Activated CD4-positive, alpha-beta T cell treated with anti-CD3 and anti-CD28 coated beads, Interleukin-2, amount 10 ng/mL, durations not matched to agents 24 days and 14 days (primary cell): ENCODE measurements at regions of chrX and their contacts with region 1.

Region 1: DNA sequence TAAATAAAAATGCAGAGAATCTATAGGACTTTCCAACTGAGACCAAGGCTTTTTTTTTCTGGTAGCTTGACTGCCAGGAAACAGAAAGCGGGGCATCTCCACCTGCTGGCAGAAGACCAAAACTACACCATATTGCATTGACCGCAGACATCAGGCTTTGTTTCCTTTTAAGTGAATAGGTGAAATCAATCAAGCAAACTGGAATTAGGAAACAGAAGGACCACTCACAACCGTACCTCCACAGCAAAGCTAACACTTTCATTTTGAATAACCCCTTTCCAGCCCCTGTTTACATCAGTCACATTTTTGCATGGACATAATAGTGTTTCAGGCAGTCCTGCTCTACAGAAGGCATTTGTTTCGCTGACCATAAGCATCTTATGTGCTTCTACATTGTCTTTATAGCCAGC is 218.2 kb downstream of the IDS start:
- DNase-seq: peak; percentile 80
- H3K4me3 Mint-ChIP-seq: no peak overlapping the region
- H3K27ac Mint-ChIP-seq: no peak overlapping the region
- H3K4me1 Mint-ChIP-seq: peaks cover 12% of the 10 kb centered on the region
- H3K27me3 Mint-ChIP-seq: no peaks in the 10 kb centered on the region

Region 2: DNA sequence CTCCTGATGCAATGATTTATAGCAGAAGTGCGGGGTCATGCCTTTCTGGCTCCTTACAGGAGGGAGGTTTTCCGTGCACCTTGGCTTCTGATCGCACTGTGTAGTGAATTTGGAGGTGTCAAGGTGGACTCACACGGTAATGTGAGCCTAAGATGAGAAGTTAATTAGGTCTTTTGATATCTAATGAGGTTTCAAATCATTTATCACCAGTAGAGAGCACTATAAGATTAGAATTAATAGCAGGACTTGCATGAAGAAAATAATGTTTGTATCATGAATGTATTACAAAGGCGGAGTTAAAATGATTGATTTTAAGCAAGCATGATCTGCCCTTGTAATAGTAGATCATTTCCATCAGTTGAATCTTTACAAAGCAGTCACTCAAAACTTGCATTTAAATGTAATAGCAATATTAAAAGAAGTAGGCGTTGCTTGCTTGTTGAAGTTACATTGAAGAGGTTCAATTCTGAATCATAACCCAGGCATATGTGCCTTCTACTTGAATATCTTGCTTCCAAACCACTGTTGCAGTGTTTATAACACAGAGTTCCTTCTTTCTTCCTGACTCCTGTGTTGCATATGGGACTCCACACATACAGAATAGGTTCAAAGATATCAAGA is 1153.7 kb before region 1 on chrX:
- intact Hi-C with region 1: loop called (anchors 5 kb)
- DNase-seq: no peak
- H3K4me3 Mint-ChIP-seq: no peak overlapping the region
- H3K27ac Mint-ChIP-seq: no peak overlapping the region
- H3K4me1 Mint-ChIP-seq: no peaks in the 10 kb centered on the region
- H3K27me3 Mint-ChIP-seq: no peaks in the 10 kb centered on the region

Region 3: DNA sequence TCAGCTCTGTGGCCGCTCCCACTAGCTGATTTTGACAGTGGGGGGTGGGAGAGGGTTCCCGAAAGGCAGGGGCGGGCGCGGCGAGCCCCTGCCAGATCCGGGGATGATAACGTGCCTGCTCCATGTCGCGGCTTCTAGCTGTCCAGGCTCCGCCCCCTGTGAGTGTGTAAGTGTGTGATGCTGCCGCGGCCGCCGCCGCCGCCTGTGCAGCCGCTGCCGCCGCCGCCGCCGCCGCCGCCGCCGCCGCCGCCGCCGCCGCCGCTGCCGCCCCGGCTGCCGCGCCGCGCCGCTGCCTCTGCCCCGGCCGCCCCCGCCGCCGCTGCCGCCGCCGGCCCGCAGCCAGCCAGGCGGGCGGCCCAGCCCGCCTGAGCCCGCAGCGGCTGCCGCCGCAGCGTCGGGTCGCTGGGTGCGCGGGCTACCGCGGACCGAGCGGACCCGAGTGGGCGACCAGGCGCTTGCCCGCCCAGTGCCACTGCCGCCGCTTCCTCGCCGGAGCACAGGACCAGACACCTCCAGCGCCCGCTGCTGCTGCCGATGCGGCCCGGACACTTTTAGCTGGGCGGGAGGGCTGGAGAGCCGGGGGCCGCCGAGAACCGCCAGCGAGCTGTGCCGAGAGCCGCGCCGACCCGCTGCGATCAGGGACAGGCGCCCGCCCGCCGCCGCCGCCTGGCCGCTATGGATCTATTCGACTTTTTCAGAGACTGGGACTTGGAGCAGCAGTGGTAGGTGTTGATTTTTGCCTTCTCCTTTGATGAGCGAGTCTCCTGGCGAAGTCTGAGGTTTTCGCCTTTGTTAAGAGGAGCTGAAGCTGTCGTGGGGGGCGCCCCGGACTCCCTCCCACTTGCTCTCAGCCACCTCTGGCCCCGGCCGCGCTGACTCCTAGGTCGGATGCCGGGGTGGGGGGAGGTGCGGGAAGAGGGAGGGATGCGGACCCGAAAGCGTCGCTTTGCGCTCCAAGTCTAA is 786.2 kb before region 1 on chrX and contains the start of gene AFF2:
- intact Hi-C with region 1: loop called (anchors 10 kb)
- DNase-seq: peak; percentile 72
- H3K4me3 Mint-ChIP-seq: peak within 1 kb of the TSS; percentile 81
- H3K27ac Mint-ChIP-seq: no peak within 1 kb of the TSS
- H3K4me1 Mint-ChIP-seq: peaks cover 8% of the 10 kb centered on the region
- H3K27me3 Mint-ChIP-seq: peaks cover 13% of the 10 kb centered on the region
- total RNA-seq, gene AFF2: 0.70 and 1.1 TPM in 2 replicates

Region 4: DNA sequence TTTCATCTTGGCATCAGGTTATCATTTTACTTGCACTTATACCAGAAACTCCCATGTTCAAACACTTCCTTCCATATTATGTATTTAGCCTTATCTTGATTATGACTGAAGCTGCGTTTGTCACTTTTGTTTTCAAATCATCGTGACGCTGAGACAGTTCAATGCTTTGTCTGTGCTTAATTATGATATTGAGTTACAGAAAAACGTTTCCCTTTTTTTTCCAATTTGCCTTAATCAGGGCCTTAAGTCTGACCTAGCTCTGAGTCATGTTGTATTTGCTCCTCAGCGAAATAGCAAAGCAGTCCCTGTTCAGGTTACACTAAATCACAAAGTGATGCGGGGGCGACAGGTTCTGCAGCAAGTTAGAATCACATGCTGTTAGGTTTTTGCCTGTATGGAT is 531.8 kb before region 1 on chrX:
- intact Hi-C with region 1: no loop called
- DNase-seq: no peak
- H3K4me3 Mint-ChIP-seq: no peak overlapping the region
- H3K27ac Mint-ChIP-seq: no peak overlapping the region
- H3K4me1 Mint-ChIP-seq: no peaks in the 10 kb centered on the region
- H3K27me3 Mint-ChIP-seq: no peaks in the 10 kb centered on the region

Region 5: DNA sequence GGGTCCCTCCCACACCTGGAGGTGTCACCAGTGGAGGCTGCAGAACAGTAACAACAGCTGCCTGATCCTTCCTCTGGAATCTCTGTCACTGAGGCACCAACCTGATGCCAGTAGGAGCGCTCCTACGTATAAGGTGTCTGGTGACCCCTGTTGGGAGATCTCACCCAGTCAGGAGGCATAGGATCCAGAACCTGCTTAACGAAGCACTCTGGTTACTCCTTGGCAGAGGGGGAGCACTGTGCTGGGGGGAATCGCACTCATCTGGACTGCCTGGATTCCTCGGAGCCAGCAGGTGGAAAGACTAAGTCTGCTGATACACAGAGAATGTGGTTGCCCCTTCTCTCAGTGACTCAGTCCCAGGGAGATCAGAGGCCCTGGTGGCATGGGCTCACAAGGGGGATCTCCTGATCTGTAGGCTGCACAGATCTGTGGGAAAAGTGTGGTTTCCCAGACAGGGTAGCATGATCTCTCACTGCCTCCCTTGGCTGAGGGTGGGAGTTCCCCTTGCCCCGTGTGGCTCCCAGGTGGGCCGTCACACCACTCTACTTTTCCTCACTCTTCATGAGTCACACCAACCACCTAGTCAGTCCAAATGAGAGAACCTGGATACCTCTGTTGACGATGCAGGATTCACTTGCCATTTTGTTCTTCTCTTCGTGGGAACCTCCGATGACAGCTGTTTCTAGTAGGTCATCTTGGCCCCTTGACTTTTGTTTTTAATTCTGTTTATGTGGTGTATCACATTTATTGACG is 87.8 kb before region 1 on chrX:
- intact Hi-C with region 1: loop called (anchors 5 kb)
- DNase-seq: no peak
- H3K4me3 Mint-ChIP-seq: no peak overlapping the region
- H3K27ac Mint-ChIP-seq: peak overlapping the region; percentile 58
- H3K4me1 Mint-ChIP-seq: peaks cover 3% of the 10 kb centered on the region
- H3K27me3 Mint-ChIP-seq: no peaks in the 10 kb centered on the region

Region 6: GRCh38 chrX:149267878-149268813 is 18.8 kb before region 1 on chrX:
- intact Hi-C with region 1: loop called (anchors 2 kb)
- DNase-seq: no peak
- H3K4me3 Mint-ChIP-seq: no peak overlapping the region
- H3K27ac Mint-ChIP-seq: peak overlapping the region; percentile 15
- H3K4me1 Mint-ChIP-seq: peaks cover 6% of the 10 kb centered on the region
- H3K27me3 Mint-ChIP-seq: peaks cover 2% of the 10 kb centered on the region

Region 7: GRCh38 chrX:149386986-149387385 is 100.0 kb after region 1 on chrX:
- intact Hi-C with region 1: no loop called
- DNase-seq: no peak
- H3K4me3 Mint-ChIP-seq: no peak overlapping the region
- H3K27ac Mint-ChIP-seq: no peak overlapping the region
- H3K4me1 Mint-ChIP-seq: no peaks in the 10 kb centered on the region
- H3K27me3 Mint-ChIP-seq: no peaks in the 10 kb centered on the region